Psoas muscle (tissue), 8 donors: ENCODE measurements at regions of chr16 and their contacts with region 1.

Region 1: GRCh38 chr16:22077700-22078313 is 14.5 kb upstream of the VWA3A start:
- DNase-seq: peak; percentile 48 to 70
- ATAC-seq: peak in 3 of 4 donors; percentile 31 to 71 (median 33)
- H3K4me3 ChIP-seq: no peak overlapping the region
- H3K27ac ChIP-seq: no peak overlapping the region
- H3K4me1 ChIP-seq: no peaks in the 10 kb centered on the region
- H3K27me3 ChIP-seq: peaks cover 0 to 1% (median 0%) of the 10 kb centered on the region in 3 donors
- CTCF ChIP-seq: peak; percentile 78

Region 2: DNA sequence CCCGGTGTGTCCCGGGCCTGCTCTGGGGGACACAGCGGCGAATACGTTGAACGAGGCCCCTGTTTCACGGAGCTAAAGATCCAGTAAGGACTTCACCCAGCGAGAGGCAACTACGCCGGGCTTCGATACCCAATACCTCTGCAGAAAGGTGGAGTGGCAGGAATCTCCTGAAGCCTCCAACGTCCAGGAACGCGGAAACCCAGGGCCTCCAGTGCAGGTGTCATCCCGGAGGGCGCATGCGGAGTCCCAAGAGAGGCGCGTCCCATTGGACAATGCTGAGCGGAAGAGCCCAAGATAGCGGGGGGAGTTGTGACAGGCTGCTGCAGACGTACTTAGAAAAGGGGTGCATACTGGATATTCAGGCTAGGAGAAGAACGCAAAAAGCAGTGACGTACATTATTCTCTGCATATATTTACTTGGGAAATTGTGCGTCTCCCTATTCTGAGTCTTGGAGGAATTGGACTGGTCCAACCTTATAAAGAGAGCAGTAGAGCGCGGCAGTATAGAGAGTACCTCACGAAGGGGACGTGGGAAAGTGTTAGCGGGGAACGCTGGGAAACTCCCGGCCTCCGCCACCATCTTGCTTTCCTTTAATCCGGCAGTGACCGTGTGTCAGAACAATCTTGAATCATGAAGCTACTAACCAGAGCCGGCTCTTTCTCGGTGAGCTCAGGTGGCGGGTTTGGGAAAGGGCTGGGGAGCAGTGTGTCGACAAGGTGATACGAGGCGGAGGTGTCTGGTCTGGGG is 124.8 kb before region 1 on chr16 and contains the start of gene UQCRC2:
- intact Hi-C with region 1: loop called in 1 of 2 experiments (anchors 5 kb)
- DNase-seq: peak; percentile 87 to 92
- ATAC-seq: peak; percentile 95 to 98 (median 96)
- H3K4me3 ChIP-seq: peak within 1 kb of the TSS; percentile 97
- H3K27ac ChIP-seq: peak within 1 kb of the TSS; percentile 97
- H3K4me1 ChIP-seq: peaks cover 42% of the 10 kb centered on the region
- H3K27me3 ChIP-seq: no peaks in the 10 kb centered on the region
- CTCF ChIP-seq: no peak
- total RNA-seq, gene UQCRC2: 434 to 716 (median 591) TPM

Region 3: DNA sequence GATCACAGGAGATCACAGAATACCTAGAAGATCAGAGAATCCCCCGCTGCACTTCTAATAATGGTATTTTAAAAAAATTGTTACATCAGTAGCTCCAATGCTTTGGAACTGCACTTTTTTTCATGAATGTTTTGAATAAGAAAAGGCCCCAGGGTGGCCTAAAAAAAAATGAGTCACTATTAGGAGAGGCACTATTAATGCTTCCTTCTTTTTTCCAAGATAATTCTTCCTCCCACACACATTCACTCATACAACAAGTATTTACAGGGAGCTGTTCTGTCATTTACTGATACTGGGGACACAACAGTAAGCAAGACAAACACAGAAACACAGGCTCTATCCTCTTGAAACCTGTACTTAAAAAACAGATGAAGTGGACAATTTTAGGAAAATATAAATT is 76.2 kb before region 1 on chr16:
- intact Hi-C with region 1: loop called (anchors 1 to 2 kb)
- DNase-seq: no peak
- ATAC-seq: no peak
- H3K4me3 ChIP-seq: no peak overlapping the region
- H3K27ac ChIP-seq: no peak overlapping the region
- H3K4me1 ChIP-seq: peaks cover 11% of the 10 kb centered on the region
- H3K27me3 ChIP-seq: no peaks in the 10 kb centered on the region
- CTCF ChIP-seq: no peak

Region 4: DNA sequence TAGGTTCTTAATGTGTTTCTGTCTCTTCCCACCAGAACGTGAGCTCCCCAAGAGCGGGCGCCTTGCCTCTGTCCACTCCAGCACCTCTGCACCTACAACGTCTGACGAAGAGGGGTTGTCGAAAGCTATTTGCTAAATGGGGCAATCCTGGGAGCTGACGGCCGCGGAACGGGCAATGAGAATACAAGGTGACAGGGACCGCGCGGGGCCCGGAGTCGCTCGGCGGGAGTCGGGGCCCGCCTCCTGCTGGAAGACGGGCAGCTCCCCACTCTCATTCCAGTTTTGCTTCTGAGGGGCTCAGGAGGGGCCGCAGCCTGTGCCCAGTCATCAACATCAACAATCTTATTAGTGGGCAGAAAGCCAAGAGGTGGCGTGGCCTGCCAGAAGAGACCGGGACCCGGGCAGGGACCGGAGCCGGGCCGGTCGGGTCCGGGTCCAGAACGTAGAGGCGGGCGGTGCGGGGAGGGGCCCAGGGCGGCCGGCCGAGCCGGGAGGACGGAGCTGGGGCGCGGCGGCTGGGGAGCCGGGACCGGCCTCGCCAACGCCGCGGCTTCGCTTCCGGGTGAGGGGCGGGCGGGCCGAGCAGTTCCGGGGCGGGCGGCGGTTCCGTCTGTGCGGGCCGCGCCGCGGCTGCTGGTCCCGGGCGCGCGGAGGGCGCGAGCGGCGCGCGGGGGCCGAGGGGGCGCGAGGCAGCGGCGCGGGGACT is 70.1 kb before region 1 on chr16 and contains the start of gene MOSMO:
- intact Hi-C with region 1: loop called in 1 of 2 experiments (anchors 2 kb)
- DNase-seq: peak; percentile 82 to 86
- ATAC-seq: peak; percentile 89 to 94 (median 92)
- H3K4me3 ChIP-seq: peak within 1 kb of the TSS; percentile 99
- H3K27ac ChIP-seq: peak within 1 kb of the TSS; percentile 95
- H3K4me1 ChIP-seq: peaks cover 35% of the 10 kb centered on the region
- H3K27me3 ChIP-seq: no peaks in the 10 kb centered on the region
- CTCF ChIP-seq: no peak
- total RNA-seq, gene MOSMO: 7.8 to 13.8 (median 10.5) TPM

Region 5: GRCh38 chr16:22141746-22142145 is 63.9 kb after region 1 on chr16:
- intact Hi-C with region 1: no loop called
- DNase-seq: no peak
- ATAC-seq: no peak
- H3K4me3 ChIP-seq: no peak overlapping the region
- H3K27ac ChIP-seq: no peak overlapping the region
- H3K4me1 ChIP-seq: no peaks in the 10 kb centered on the region
- H3K27me3 ChIP-seq: peaks cover 0 to 1% (median 0%) of the 10 kb centered on the region in 3 donors
- CTCF ChIP-seq: peak; percentile 9

Region 6: DNA sequence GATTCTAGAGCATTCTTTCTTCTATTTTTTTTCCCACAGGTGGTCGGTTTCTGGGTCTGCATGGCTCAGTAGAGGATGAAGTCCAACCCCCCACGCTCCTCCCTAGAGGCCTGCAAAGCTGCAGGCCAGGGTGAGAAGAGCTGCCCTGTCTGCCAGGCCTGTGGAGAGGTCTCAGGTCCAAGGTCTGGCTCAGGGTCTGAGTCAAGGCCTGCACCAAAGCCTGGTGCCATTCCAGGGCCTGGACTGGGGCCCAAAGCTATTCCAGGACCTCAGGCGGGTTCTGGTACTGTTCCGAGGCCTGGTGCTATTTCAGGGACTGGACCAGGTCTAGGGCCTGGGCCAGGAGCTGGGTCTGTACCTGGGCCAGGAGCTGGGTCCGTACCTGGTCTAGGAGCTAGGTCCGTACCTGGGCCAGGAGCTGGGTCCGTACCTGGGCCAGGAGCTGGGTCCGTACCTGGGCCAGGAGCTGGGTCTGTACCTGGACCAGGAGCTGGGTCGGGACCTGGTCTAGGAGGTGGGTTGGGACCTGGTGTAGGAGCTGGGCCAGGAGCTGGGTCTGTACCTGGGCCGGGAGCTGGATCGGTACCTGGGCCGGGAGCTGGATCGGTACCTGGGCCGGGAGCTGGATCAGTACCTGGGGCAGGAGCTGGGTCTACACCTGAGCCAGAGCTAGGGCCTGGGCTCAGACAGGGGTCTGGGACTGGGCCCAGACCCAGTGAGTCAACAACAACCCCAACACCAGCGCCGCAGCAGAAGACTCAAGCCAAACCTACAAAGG is 87.9 kb after region 1 on chr16:
- intact Hi-C with region 1: no loop called
- DNase-seq: no peak
- ATAC-seq: no peak
- H3K4me3 ChIP-seq: no peak overlapping the region
- H3K27ac ChIP-seq: no peak overlapping the region
- H3K4me1 ChIP-seq: no peaks in the 10 kb centered on the region
- H3K27me3 ChIP-seq: peaks cover 0 to 25% (median 4%) of the 10 kb centered on the region in 3 donors
- CTCF ChIP-seq: no peak

Region 7: GRCh38 chr16:22190776-22191531 is 113.1 kb after region 1 on chr16:
- intact Hi-C with region 1: no loop called
- DNase-seq: peak; percentile 100
- ATAC-seq: peak; percentile 79 to 80 (median 80)
- H3K4me3 ChIP-seq: peak overlapping the region; percentile 84
- H3K27ac ChIP-seq: peak overlapping the region; percentile 90
- H3K4me1 ChIP-seq: peaks cover 30% of the 10 kb centered on the region
- H3K27me3 ChIP-seq: no peaks in the 10 kb centered on the region
- CTCF ChIP-seq: no peak